ENCODE measurements at regions of chr12 and their contacts with region 1.

Region 1: GRCh38 chr12:54259194-54260011 is 20.5 kb downstream of the CBX5 start:
- DNase-seq: peak; percentile 87 to 88
- H3K4me3 ChIP-seq: peak overlapping the region in 2 of 3 donors; percentile 12 to 27
- H3K27ac ChIP-seq: peak overlapping the region; percentile 72 to 91 (median 77)
- H3K4me1 ChIP-seq: peaks cover 45 to 62% of the 10 kb centered on the region in 2 donors
- H3K27me3 ChIP-seq: no peaks in the 10 kb centered on the region
- CTCF ChIP-seq: no peak
- POLR2A ChIP-seq: peak in 1 of 2 donors; percentile 64

Region 2: GRCh38 chr12:54126696-54127537 is 132.5 kb before region 1 on chr12:
- intact Hi-C with region 1: no loop called
- DNase-seq: peak; percentile 27 to 28
- H3K4me3 ChIP-seq: peak overlapping the region in 2 of 3 donors; percentile 11 to 49
- H3K27ac ChIP-seq: peak overlapping the region in 2 of 3 donors; percentile 2 to 71
- H3K4me1 ChIP-seq: peaks cover 6 to 17% of the 10 kb centered on the region in 2 donors
- H3K27me3 ChIP-seq: peaks cover 17% of the 10 kb centered on the region
- CTCF ChIP-seq: no peak
- POLR2A ChIP-seq: no peak

Region 3: GRCh38 chr12:54368709-54369583 is 109.5 kb after region 1 on chr12:
- intact Hi-C with region 1: loop called (anchors 10 kb)
- DNase-seq: peak; percentile 86 to 92
- H3K4me3 ChIP-seq: no peak overlapping the region
- H3K27ac ChIP-seq: peak overlapping the region in 1 of 3 donors; percentile 63
- H3K4me1 ChIP-seq: peaks cover 14 to 42% of the 10 kb centered on the region in 2 donors
- H3K27me3 ChIP-seq: no peaks in the 10 kb centered on the region
- CTCF ChIP-seq: peak; percentile 47 to 83 (median 76)
- POLR2A ChIP-seq: no peak

Measured in thyroid gland (tissue), 4 donors.